Endothelial cell of umbilical vein (primary cell): ENCODE measurements at regions of chr13 and their contacts with region 1.

Region 1: GRCh38 chr13:101661839-101662238 is 209.4 kb downstream of the ITGBL1 start:
- DNase-seq: peak; percentile 84
- H3K4me3 ChIP-seq: no peak overlapping the region
- H3K27ac ChIP-seq: peak overlapping the region; percentile 32
- H3K4me1 ChIP-seq: peaks cover 23% of the 10 kb centered on the region
- H3K27me3 ChIP-seq: no peaks in the 10 kb centered on the region
- CTCF ChIP-seq: no peak
- POLR2A ChIP-seq: no peak

Region 2: GRCh38 chr13:101520672-101521071 is 141.2 kb before region 1 on chr13:
- CTCF ChIA-PET with region 1: no interaction called
- POLR2A ChIA-PET with region 1: no interaction called
- dilution Hi-C with region 1: no loop called
- intact Hi-C with region 1: loop called (anchors 2 kb)
- DNase-seq: peak; percentile 48
- H3K4me3 ChIP-seq: no peak overlapping the region
- H3K27ac ChIP-seq: peak overlapping the region; percentile 21
- H3K4me1 ChIP-seq: peaks cover 23% of the 10 kb centered on the region
- H3K27me3 ChIP-seq: no peaks in the 10 kb centered on the region
- CTCF ChIP-seq: no peak
- POLR2A ChIP-seq: no peak

Region 3: DNA sequence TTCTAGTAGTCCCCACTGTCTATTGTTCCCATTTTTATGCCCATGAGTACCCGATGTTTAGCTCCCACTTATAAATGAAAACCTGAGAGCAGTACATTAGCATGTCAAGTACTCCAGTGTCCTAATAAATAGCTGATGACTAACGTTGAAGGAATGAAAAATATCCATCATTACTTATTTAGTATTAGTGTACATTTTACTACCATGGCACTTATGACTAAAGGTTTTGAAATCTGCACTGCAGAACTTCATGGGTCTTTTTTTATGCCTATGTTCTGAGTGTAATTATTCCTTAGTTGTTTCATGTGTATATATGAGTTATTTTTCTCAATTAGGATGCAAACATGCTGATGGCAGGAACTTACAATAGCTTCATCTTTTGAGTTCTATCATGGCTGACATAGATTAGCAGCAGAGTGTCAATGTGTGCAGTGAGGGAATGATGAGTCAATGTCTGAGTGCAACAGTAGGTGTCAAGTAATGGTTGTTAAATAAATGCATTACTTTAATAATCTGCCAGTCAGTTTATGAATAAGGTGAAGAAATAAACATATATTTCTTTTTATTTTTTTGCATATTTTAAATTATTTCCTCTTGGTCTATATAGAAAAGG is 20.9 kb before region 1 on chr13:
- CTCF ChIA-PET with region 1: interaction called, 7 read pairs
- POLR2A ChIA-PET with region 1: no interaction called
- dilution Hi-C with region 1: no loop called
- intact Hi-C with region 1: loop called (anchors 1 kb)
- DNase-seq: peak; percentile 68
- H3K4me3 ChIP-seq: no peak overlapping the region
- H3K27ac ChIP-seq: peak overlapping the region; percentile 84
- H3K4me1 ChIP-seq: peaks cover 24% of the 10 kb centered on the region
- H3K27me3 ChIP-seq: no peaks in the 10 kb centered on the region
- CTCF ChIP-seq: no peak
- POLR2A ChIP-seq: no peak